CD4-positive, alpha-beta memory T cell (primary cell): ENCODE measurements at regions of chr2 and their contacts with region 1.

Region 1: GRCh38 chr2:203740780-203741281 is 34.4 kb downstream of the CD28 start:
- DNase-seq: peak; percentile 78 to 88 (median 86)
- H3K4me3 ChIP-seq: peak overlapping the region in 1 of 2 donors; percentile 28
- H3K4me3 Mint-ChIP-seq: peak overlapping the region; percentile 17 to 86 (median 70)
- H3K27ac ChIP-seq: peak overlapping the region; percentile 66
- H3K27ac Mint-ChIP-seq: peak overlapping the region; percentile 81 to 99 (median 95)
- H3K4me1 ChIP-seq: peaks cover 94% of the 10 kb centered on the region
- H3K4me1 Mint-ChIP-seq: peaks cover 65 to 90% (median 79%) of the 10 kb centered on the region in 4 donors
- H3K27me3 ChIP-seq: no peaks in the 10 kb centered on the region
- H3K27me3 Mint-ChIP-seq: no peaks in the 10 kb centered on the region

Region 2: DNA sequence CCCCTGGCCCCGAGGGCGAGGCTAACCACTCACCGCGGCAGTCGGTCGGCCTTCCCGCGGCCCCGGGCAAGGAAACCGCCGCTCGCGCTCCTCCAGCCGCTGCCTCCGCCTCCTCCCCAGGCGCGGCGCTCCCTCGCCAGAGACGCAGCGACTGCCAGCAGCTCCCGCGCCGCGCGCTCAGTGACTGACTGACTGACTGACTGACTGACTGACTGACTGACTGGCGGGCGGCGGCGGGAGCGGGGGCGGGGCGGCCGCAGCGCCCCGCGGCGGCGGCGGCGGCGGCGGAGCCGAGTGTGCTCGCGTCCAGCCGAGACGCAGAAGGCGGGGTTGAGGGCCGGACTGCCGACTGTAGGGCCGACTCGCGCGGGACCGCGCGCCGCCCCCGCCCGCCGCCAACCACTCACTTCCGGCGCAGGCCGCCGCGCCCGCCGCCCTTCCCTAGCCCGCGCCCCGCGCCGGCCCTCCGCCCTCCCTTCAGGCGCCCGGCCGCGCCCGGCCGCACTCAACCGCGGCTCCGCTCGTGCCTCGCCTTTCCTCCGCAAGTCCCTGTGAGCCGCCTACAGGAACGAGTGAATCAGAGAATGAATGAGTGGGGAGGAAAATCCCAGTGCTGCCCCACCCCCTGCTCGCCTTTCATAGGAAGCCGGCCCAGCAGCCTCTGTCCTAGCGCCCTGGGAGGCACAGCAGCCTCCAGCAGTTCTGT is 205.6 kb before region 1 on chr2 and contains the start of gene RAPH1:
- CTCF ChIA-PET with region 1: no interaction called
- POLR2A ChIA-PET with region 1: interaction called, 6 read pairs
- intact Hi-C with region 1: loop called (anchors 2 kb)
- DNase-seq: peak; percentile 39 to 67 (median 56)
- H3K4me3 ChIP-seq: peak within 1 kb of the TSS; percentile 20 to 58
- H3K4me3 Mint-ChIP-seq: peak within 1 kb of the TSS; percentile 86 to 95 (median 91)
- H3K27ac ChIP-seq: no peak within 1 kb of the TSS
- H3K27ac Mint-ChIP-seq: peak within 1 kb of the TSS; percentile 72 to 89 (median 79)
- H3K4me1 ChIP-seq: peaks cover 16% of the 10 kb centered on the region
- H3K4me1 Mint-ChIP-seq: peaks cover 14 to 29% (median 21%) of the 10 kb centered on the region in 4 donors
- H3K27me3 ChIP-seq: no peaks in the 10 kb centered on the region
- H3K27me3 Mint-ChIP-seq: peaks cover 8% of the 10 kb centered on the region in 2 donors
- total RNA-seq, gene RAPH1: 2.1 to 2.6 TPM

Region 3: GRCh38 chr2:203718087-203718486 is 22.7 kb before region 1 on chr2:
- CTCF ChIA-PET with region 1: interaction called, 32 read pairs
- POLR2A ChIA-PET with region 1: interaction called, 794 read pairs
- intact Hi-C with region 1: loop called (anchors 1 kb)
- DNase-seq: peak; percentile 65 to 82 (median 70)
- H3K4me3 ChIP-seq: peak overlapping the region in 1 of 2 donors; percentile 32
- H3K4me3 Mint-ChIP-seq: peak overlapping the region; percentile 75 to 92 (median 80)
- H3K27ac ChIP-seq: peak overlapping the region; percentile 52
- H3K27ac Mint-ChIP-seq: peak overlapping the region; percentile 94 to 98 (median 95)
- H3K4me1 ChIP-seq: peaks cover 100% of the 10 kb centered on the region
- H3K4me1 Mint-ChIP-seq: peaks cover 86 to 99% (median 93%) of the 10 kb centered on the region in 4 donors
- H3K27me3 ChIP-seq: no peaks in the 10 kb centered on the region
- H3K27me3 Mint-ChIP-seq: no peaks in the 10 kb centered on the region

Region 4: DNA sequence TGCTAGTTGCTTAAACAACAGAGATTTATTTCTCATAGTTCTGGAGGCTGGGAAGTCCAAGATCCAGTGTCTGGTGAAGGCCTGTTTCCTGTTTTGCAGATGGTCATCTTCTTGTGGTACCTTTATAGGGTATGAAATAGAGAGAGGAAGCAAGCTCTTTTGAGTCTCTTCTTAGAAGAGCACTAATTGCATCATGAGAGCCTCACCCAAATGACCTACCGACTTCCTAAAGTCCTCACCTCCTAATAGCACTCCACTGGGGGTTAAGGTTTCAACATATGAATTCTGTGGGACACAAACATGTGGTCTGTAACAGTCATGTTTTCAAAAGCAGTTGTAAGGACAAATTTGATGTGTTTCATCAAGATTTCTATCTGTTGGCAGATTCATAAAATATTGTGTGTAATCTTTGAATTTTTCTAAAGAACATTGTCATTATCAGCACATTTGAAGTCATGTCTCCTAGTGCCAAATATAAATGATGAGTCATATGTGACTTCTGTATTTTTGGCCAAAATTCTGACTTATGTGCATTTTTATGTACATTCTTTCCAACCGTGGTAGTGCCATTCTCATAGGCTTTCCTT is 10.9 kb after region 1 on chr2:
- CTCF ChIA-PET with region 1: interaction called, 9 read pairs
- POLR2A ChIA-PET with region 1: interaction called, 72 read pairs
- intact Hi-C with region 1: no loop called
- DNase-seq: no peak
- H3K4me3 ChIP-seq: no peak overlapping the region
- H3K4me3 Mint-ChIP-seq: peak overlapping the region in 5 of 8 donors; percentile 15 to 63 (median 32)
- H3K27ac ChIP-seq: no peak overlapping the region
- H3K27ac Mint-ChIP-seq: peak overlapping the region in 5 of 7 donors; percentile 34 to 80 (median 54)
- H3K4me1 ChIP-seq: peaks cover 47% of the 10 kb centered on the region
- H3K4me1 Mint-ChIP-seq: peaks cover 42 to 69% (median 56%) of the 10 kb centered on the region in 4 donors
- H3K27me3 ChIP-seq: no peaks in the 10 kb centered on the region
- H3K27me3 Mint-ChIP-seq: no peaks in the 10 kb centered on the region

Region 5: GRCh38 chr2:203782262-203782976 is 41.6 kb after region 1 on chr2:
- CTCF ChIA-PET with region 1: interaction called, 9 read pairs
- POLR2A ChIA-PET with region 1: interaction called, 16 read pairs
- intact Hi-C with region 1: loop called (anchors 1 kb)
- DNase-seq: peak; percentile 67 to 79 (median 69)
- H3K4me3 ChIP-seq: no peak overlapping the region
- H3K4me3 Mint-ChIP-seq: peak overlapping the region in 3 of 8 donors; percentile 24 to 66 (median 30)
- H3K27ac ChIP-seq: no peak overlapping the region
- H3K27ac Mint-ChIP-seq: peak overlapping the region in 6 of 7 donors; percentile 44 to 85 (median 70)
- H3K4me1 ChIP-seq: peaks cover 20% of the 10 kb centered on the region
- H3K4me1 Mint-ChIP-seq: peaks cover 31 to 55% (median 40%) of the 10 kb centered on the region in 4 donors
- H3K27me3 ChIP-seq: no peaks in the 10 kb centered on the region
- H3K27me3 Mint-ChIP-seq: no peaks in the 10 kb centered on the region

Region 6: GRCh38 chr2:203871371-203871983 is 130.6 kb after region 1 on chr2:
- CTCF ChIA-PET with region 1: interaction called, 3 read pairs
- POLR2A ChIA-PET with region 1: interaction called, 22 read pairs
- intact Hi-C with region 1: no loop called
- DNase-seq: no peak
- H3K4me3 ChIP-seq: peak overlapping the region; percentile 17 to 54
- H3K4me3 Mint-ChIP-seq: peak overlapping the region; percentile 85 to 95 (median 90)
- H3K27ac ChIP-seq: peak overlapping the region; percentile 59
- H3K27ac Mint-ChIP-seq: peak overlapping the region; percentile 41 to 89 (median 81)
- H3K4me1 ChIP-seq: peaks cover 84% of the 10 kb centered on the region
- H3K4me1 Mint-ChIP-seq: peaks cover 58 to 87% (median 74%) of the 10 kb centered on the region in 4 donors
- H3K27me3 ChIP-seq: no peaks in the 10 kb centered on the region
- H3K27me3 Mint-ChIP-seq: no peaks in the 10 kb centered on the region

Region 7: DNA sequence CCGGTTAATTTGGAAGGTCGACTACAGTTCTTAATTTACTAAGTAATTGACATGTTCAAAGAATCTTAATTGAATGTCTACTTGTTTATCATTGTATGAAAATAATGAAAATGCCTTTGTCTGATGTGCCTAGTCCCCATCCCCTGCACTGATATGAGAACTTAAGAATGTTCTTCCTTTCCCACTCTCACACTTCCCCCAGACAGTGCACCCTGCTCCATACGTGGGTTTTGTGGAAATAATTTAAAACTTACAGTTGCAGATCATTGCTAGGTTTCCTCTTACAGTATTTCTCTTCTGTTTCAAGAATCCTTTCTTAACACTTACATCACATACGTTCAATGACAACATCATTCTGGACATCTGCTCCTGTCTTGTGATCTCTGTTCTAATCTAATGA is 199.2 kb after region 1 on chr2:
- CTCF ChIA-PET with region 1: no interaction called
- POLR2A ChIA-PET with region 1: no interaction called
- intact Hi-C with region 1: no loop called
- DNase-seq: no peak
- H3K4me3 ChIP-seq: peak overlapping the region; percentile 45 to 77
- H3K4me3 Mint-ChIP-seq: peak overlapping the region; percentile 91 to 99 (median 96)
- H3K27ac ChIP-seq: peak overlapping the region; percentile 79
- H3K27ac Mint-ChIP-seq: peak overlapping the region; percentile 79 to 96 (median 93)
- H3K4me1 ChIP-seq: peaks cover 66% of the 10 kb centered on the region
- H3K4me1 Mint-ChIP-seq: peaks cover 49 to 91% (median 61%) of the 10 kb centered on the region in 4 donors
- H3K27me3 ChIP-seq: no peaks in the 10 kb centered on the region
- H3K27me3 Mint-ChIP-seq: no peaks in the 10 kb centered on the region